A673 (cell line): ENCODE measurements at regions of chr1 and their contacts with region 1.

Region 1: GRCh38 chr1:108559215-108560186 is at the start of gene EEIG2:
- DNase-seq: peak; percentile 95
- H3K4me3 ChIP-seq: peak within 1 kb of the TSS; percentile 58
- H3K27ac ChIP-seq: peak within 1 kb of the TSS; percentile 45
- H3K4me1 ChIP-seq: peaks cover 9% of the 10 kb centered on the region
- H3K27me3 ChIP-seq: no peaks in the 10 kb centered on the region
- CTCF ChIP-seq: peak; percentile 59
- total RNA-seq, gene EEIG2: 14.6 and 15.7 TPM in 2 replicates

Region 2: DNA sequence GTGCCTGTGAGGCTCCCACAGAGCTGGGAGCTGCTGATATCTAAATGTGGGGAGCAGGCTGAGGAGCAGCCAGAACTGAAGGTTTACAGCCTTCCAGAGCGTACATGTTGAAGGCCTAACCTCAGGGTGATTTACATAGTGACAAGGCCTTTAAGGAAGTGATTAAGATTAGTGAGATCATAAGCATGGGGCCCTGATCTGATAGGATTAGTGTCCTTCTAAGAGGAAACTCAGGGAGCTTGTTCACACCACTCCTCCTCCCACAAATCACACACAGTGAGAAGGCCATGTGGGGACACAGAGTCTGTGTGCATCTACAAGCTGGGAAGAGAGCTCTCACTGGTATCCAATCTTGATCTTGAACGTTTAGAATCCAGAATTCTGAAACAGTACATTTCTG is 201.7 kb before region 1 on chr1:
- CTCF ChIA-PET with region 1: no interaction called
- POLR2A ChIA-PET with region 1: no interaction called
- intact Hi-C with region 1: no loop called
- DNase-seq: peak; percentile 18
- H3K4me3 ChIP-seq: no peak overlapping the region
- H3K27ac ChIP-seq: no peak overlapping the region
- H3K4me1 ChIP-seq: no peaks in the 10 kb centered on the region
- H3K27me3 ChIP-seq: peaks cover 6% of the 10 kb centered on the region
- CTCF ChIP-seq: no peak

Region 3: DNA sequence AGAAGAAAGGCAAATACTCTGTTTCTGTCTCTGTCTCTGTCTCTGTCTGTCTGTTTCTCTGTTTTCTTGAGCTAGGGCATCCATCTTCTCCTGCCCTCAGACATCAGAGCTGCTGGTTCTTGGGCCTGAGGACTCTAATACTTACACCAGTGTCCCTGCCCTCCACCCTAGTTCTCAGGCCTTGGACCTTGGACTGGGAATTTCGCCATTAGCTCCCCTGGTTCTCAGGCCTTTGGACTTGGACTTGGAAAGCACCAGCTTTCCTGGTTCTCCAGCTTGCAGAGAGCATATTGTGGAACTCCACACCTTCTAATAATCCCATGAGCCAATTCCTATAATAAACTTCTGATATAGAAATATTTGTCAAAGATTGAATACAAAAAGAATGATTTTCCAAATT is 76.8 kb before region 1 on chr1:
- CTCF ChIA-PET with region 1: no interaction called
- POLR2A ChIA-PET with region 1: no interaction called
- intact Hi-C with region 1: no loop called
- DNase-seq: no peak
- H3K4me3 ChIP-seq: no peak overlapping the region
- H3K27ac ChIP-seq: no peak overlapping the region
- H3K4me1 ChIP-seq: no peaks in the 10 kb centered on the region
- H3K27me3 ChIP-seq: no peaks in the 10 kb centered on the region
- CTCF ChIP-seq: no peak

Region 4: DNA sequence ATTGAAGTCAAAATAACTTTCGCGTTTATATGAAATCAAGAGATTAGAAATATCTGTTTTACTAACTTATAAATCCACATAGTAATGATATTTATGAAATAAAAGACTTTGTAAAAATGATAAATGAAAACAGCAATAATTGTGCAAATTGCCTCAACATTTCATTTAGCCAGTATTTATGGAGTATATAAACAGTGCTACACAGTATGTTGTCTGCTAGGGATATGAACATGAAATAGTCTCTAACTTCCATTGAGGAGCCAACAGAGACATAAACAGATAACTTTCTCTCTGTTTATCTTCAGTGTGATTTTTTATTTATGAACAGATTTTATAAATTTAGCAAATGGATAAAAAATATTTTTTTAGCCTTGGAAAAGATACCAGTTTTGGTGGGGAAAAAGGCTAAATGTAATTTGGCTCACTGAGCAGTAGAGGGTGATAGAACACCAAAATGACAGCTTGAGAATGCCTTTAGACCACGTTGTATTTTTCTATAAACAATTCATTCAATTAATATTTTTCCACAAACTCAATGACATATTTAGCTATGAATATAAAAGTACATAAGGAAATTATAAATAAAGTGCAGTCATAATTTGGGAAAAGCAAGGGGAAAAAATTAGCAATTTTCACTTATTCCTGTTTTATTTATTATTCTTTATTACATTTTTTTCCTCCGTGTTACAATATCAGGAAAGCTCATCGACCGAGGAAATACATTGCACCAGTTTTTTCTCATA is 47.1 kb before region 1 on chr1:
- CTCF ChIA-PET with region 1: interaction called, 4 read pairs
- POLR2A ChIA-PET with region 1: no interaction called
- intact Hi-C with region 1: loop called (anchors 1 kb)
- DNase-seq: peak; percentile 55
- H3K4me3 ChIP-seq: no peak overlapping the region
- H3K27ac ChIP-seq: no peak overlapping the region
- H3K4me1 ChIP-seq: no peaks in the 10 kb centered on the region
- H3K27me3 ChIP-seq: no peaks in the 10 kb centered on the region
- CTCF ChIP-seq: peak; percentile 86

Region 5: DNA sequence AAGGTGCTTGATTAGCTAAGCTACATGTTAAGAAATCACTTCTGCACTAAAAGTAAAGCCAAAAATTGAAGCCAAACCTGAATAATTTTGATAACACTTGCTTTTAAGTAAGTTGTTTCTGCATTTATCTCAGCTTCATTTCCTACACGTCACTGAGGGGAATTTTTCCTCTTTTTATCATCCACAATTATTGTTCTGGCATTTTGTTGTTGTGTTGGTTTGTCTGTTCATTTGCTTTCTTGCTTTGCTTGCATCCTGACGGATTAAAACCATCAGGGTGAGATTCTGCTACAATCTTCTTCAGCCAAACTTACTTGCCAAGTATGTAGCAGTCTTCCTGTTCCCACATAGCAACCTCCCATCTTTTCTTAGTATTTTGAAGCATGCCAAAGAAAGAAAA is 17.6 kb before region 1 on chr1:
- CTCF ChIA-PET with region 1: interaction called, 3 read pairs
- POLR2A ChIA-PET with region 1: no interaction called
- intact Hi-C with region 1: loop called (anchors 2 kb)
- DNase-seq: no peak
- H3K4me3 ChIP-seq: no peak overlapping the region
- H3K27ac ChIP-seq: no peak overlapping the region
- H3K4me1 ChIP-seq: peaks cover 22% of the 10 kb centered on the region
- H3K27me3 ChIP-seq: no peaks in the 10 kb centered on the region
- CTCF ChIP-seq: no peak